Tibial artery (tissue), 4 donors: ENCODE measurements at regions of chr20 and their contacts with region 1.

Region 1: GRCh38 chr20:62861726-62862336 is at the start of gene TCFL5:
- DNase-seq: peak; percentile 75 to 93
- H3K4me3 ChIP-seq: peak within 1 kb of the TSS; percentile 54 to 55
- H3K27ac ChIP-seq: peak within 1 kb of the TSS; percentile 54 to 65
- H3K4me1 ChIP-seq: peaks cover 0 to 16% (median 12%) of the 10 kb centered on the region in 4 donors
- H3K27me3 ChIP-seq: no peaks in the 10 kb centered on the region
- CTCF ChIP-seq: no peak

Region 2: GRCh38 chr20:62595491-62595890 is 266.3 kb before region 1 on chr20:
- intact Hi-C with region 1: no loop called
- DNase-seq: peak in 1 of 2 donors; percentile 53
- H3K4me3 ChIP-seq: no peak overlapping the region
- H3K27ac ChIP-seq: no peak overlapping the region
- H3K4me1 ChIP-seq: peaks cover 0 to 2% (median 0%) of the 10 kb centered on the region in 4 donors
- H3K27me3 ChIP-seq: peaks cover 0 to 93% of the 10 kb centered on the region in 2 donors
- CTCF ChIP-seq: no peak

Region 3: GRCh38 chr20:62808211-62808865 is 53.5 kb before region 1 on chr20:
- intact Hi-C with region 1: loop called (anchors 10 kb)
- DNase-seq: peak; percentile 55 to 81
- H3K4me3 ChIP-seq: no peak overlapping the region
- H3K27ac ChIP-seq: no peak overlapping the region
- H3K4me1 ChIP-seq: peaks cover 0 to 39% (median 26%) of the 10 kb centered on the region in 4 donors
- H3K27me3 ChIP-seq: no peaks in the 10 kb centered on the region
- CTCF ChIP-seq: peak; percentile 85 to 93

Region 4: DNA sequence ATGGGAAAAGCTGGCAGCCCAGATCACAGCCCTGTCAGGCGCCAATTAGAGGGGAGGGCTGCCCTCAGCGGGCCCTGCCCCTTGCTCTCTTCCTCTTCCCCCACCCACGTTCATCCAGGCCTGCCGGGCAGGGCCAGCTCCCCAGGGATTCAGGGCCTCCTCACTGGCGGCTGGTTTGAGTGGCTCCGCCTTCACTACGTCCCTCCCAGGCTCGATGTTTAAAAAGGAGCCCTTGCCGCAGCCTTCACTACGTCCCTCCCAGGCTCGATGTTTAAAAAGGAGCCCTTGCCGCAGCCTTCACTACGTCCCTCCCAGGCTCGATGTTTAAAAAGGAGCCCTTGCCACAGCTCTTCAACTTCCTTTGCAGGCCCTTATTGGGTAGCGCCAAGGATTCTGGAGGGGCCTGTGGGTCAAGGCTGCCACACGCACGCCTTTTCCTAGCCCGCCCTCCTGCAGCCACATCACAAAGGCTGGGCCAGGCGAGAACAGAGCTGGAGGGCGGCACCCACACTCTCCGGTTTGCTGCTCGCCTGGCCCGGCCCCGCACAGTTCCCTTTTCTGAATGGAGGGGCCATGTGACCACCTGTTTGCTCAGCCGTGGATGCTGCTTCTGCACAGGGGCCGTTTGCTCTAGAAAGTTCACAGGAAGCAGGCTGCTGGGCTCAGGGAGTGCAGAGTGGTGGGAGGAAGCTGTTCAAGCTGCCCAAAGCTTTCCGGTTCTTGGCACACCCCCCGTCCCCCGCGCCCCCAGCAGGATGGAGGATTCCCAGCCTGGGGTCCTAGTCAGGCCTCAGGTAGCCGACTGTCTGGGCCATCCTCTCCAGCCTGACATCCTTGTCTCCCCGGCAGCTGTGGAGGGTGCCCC is 92.2 kb after region 1 on chr20:
- intact Hi-C with region 1: no loop called
- DNase-seq: peak; percentile 82 to 92
- H3K4me3 ChIP-seq: peak overlapping the region; percentile 34 to 51
- H3K27ac ChIP-seq: peak overlapping the region; percentile 86 to 98
- H3K4me1 ChIP-seq: peaks cover 0 to 33% (median 26%) of the 10 kb centered on the region in 4 donors
- H3K27me3 ChIP-seq: no peaks in the 10 kb centered on the region
- CTCF ChIP-seq: no peak

Region 5: DNA sequence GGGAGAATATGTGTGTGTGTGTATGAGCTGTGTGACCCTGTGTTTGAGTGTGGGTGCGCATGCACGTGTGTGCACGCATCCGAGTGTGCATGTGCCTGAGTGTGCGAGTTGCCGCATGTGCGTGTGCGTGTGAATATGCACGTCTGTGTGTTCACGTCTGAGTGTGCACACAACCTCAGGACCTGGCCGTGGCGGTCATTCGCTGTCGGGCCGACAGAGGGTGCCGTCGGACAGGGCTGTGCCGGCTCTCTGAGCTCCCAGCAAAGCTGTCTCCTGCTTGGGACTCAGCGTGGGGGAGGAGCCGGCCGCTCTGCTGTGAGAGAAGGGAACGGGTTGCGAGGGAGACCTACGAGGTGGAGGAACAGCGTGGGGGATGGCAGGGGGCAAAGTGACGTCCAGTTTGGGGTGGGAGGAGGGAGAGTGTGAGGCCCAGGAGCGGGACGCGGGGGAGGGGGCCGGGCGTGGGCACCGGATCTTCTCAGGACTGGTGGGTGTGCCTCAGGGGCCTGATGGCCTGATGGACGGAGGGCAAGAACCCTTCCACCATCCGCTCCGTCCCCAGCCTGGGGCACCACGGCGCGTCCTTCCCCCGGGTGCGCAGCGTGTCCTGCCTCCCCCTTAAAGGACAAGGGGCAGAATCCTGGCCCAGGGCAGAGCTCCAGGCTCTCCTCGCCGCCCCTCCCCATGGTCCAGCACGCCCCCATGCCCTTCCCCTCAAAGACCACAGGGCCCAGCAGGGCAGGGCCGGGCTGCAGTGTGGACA is 110.6 kb after region 1 on chr20:
- intact Hi-C with region 1: no loop called
- DNase-seq: peak; percentile 84 to 87
- H3K4me3 ChIP-seq: peak overlapping the region; percentile 16 to 33
- H3K27ac ChIP-seq: no peak overlapping the region
- H3K4me1 ChIP-seq: peaks cover 0 to 10% (median 8%) of the 10 kb centered on the region in 4 donors
- H3K27me3 ChIP-seq: peaks cover 0 to 72% of the 10 kb centered on the region in 2 donors
- CTCF ChIP-seq: peak; percentile 94 to 96

Region 6: DNA sequence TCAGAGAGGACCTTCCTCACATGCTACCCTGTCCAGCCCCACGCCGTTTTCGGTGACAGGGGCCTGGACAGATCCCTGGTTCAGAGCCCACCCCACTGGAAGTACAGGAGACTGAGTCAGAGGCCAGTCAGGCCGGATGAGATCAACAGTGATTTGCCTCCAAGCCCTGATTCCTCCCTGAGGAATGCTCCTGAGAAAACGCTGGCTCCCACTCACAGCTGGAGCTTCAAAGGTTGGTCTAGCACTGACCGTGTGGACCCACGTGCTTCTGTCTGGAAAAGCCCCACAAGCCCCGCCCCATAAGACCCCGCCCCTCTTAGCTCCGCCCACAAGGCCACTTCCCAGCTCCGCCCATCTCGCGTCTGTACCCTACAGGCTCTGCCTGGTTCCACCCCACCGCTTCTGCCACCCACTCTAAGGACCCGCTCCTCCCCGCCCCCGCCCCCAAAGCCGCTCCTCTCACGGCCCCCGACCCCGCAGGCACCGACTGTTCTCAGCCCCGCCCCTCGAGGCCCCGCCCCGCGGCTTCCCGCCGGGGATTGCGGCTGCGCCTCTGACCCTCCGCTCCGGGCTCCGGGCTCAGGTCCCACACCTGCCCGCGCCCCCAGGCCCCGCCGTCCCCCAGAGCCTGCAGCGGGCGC is 209.8 kb after region 1 on chr20:
- intact Hi-C with region 1: no loop called
- DNase-seq: peak in 1 of 2 donors; percentile 48
- H3K4me3 ChIP-seq: no peak overlapping the region
- H3K27ac ChIP-seq: no peak overlapping the region
- H3K4me1 ChIP-seq: peaks cover 0 to 16% (median 4%) of the 10 kb centered on the region in 4 donors
- H3K27me3 ChIP-seq: peaks cover 7 to 54% of the 10 kb centered on the region in 2 donors
- CTCF ChIP-seq: no peak